ENCODE measurements at regions of chr9 and their contacts with region 1.

Region 1: DNA sequence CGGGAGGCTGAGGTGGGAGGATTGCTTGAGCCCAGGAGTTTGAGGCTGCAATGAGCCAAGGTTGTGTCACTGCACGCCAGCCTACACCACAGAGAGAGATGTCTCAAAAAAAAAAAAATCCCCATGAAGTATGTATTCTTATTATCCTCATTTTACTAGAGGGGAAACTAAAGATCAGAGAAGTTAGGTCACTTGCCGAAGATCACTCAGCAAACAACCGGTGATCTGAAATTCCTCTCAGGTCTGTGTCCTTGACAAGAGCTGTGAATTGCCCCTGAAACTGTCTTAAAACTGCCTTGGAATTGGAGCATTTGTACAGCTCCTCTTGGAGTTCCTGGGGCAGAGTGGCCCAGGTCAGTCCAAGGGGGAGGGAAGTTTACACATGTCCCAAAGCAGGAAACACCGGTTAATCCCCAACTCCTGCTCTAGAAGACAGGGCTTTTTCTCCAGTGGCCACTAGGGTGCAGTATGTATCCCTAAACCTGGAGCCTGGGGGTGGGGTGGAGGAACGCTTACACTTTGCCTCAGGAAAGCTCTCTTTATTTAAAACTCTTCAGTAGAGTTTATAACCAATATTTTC is 27.6 kb downstream of the AQP7 start:
- DNase-seq: peak; percentile 84
- ATAC-seq: peak; percentile 97
- H3K4me3 Mint-ChIP-seq: no peak overlapping the region
- H3K27ac Mint-ChIP-seq: no peak overlapping the region
- H3K4me1 Mint-ChIP-seq: peaks cover 4% of the 10 kb centered on the region
- H3K27me3 Mint-ChIP-seq: no peaks in the 10 kb centered on the region
- CTCF ChIP-seq: peak; percentile 92

Region 2: GRCh38 chr9:33320568-33321261 is 54.0 kb before region 1 on chr9:
- CTCF ChIA-PET with region 1: interaction called, 13 read pairs
- POLR2A ChIA-PET with region 1: no interaction called
- intact Hi-C with region 1: no loop called
- DNase-seq: no peak
- ATAC-seq: no peak
- H3K4me3 Mint-ChIP-seq: no peak overlapping the region
- H3K27ac Mint-ChIP-seq: peak overlapping the region; percentile 77
- H3K4me1 Mint-ChIP-seq: peaks cover 12% of the 10 kb centered on the region
- H3K27me3 Mint-ChIP-seq: no peaks in the 10 kb centered on the region
- CTCF ChIP-seq: no peak

Region 3: DNA sequence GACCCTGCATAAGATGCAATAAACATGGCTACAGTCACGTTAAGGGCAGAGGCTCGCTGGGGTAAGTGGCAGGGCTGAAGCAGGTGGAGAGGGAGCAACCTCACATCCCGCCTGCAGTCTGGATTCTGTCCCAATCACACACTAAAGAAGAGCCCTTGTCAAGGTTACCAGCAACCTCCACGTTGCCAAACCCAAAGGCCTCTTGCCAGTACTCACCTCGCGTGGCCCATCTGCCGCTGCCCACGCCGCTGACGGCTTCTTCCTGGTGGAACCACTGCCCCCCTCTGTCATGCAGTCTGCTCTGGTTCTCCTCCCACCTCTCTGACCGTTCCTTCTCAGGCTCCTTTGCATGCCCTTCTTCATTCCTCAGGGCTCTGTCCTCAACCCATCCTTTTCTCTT is 18.9 kb after region 1 on chr9:
- CTCF ChIA-PET with region 1: interaction called, 17 read pairs
- POLR2A ChIA-PET with region 1: interaction called, 3 read pairs
- intact Hi-C with region 1: no loop called
- DNase-seq: no peak
- ATAC-seq: no peak
- H3K4me3 Mint-ChIP-seq: no peak overlapping the region
- H3K27ac Mint-ChIP-seq: no peak overlapping the region
- H3K4me1 Mint-ChIP-seq: no peaks in the 10 kb centered on the region
- H3K27me3 Mint-ChIP-seq: no peaks in the 10 kb centered on the region
- CTCF ChIP-seq: no peak

Region 4: GRCh38 chr9:33452828-33453271 is 78.1 kb after region 1 on chr9:
- CTCF ChIA-PET with region 1: interaction called, 23 read pairs
- POLR2A ChIA-PET with region 1: interaction called, 3 read pairs
- intact Hi-C with region 1: no loop called
- DNase-seq: peak; percentile 80
- ATAC-seq: peak; percentile 84
- H3K4me3 Mint-ChIP-seq: no peak overlapping the region
- H3K27ac Mint-ChIP-seq: peak overlapping the region; percentile 73
- H3K4me1 Mint-ChIP-seq: peaks cover 60% of the 10 kb centered on the region
- H3K27me3 Mint-ChIP-seq: no peaks in the 10 kb centered on the region
- CTCF ChIP-seq: peak; percentile 88

Region 5: DNA sequence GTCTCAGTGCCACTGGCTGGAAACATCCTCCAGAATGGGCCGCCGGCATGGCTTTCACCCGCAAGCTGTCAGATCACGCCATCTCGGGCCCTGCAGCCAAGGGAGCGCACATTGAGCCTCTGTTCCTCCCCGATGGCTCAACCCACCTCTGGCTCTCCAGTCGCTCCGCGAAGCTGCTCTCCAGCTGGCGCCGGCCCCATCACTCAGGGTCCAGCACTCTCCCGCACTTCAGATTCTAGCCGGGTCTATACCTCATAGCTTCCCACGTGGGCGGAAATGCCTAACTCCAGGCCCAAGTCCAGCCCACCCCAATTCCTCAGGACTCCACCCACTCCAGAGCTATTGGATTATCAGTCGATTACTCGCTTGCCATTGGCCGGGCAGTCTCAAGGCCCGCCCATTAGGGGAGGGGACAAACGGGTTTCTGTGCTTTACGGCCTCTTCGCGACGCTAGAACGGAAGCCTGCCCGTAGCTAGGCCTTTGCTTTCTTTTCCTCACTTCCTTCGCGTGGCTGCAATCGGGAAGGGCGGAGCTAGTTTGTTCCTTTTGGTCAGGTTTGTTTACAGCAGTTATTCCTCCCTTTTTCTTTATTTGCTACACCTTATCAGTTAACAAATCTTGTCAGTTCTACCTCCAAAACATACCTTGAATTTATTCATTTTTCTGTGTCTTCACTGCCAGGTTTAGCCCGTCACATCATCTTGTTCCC is 99.1 kb after region 1 on chr9 and contains the start of gene NOL6:
- CTCF ChIA-PET with region 1: interaction called, 47 read pairs
- POLR2A ChIA-PET with region 1: interaction called, 7 read pairs
- intact Hi-C with region 1: no loop called
- DNase-seq: peak; percentile 99
- ATAC-seq: peak; percentile 100
- H3K4me3 Mint-ChIP-seq: peak within 1 kb of the TSS; percentile 89
- H3K27ac Mint-ChIP-seq: peak within 1 kb of the TSS; percentile 94
- H3K4me1 Mint-ChIP-seq: peaks cover 23% of the 10 kb centered on the region
- H3K27me3 Mint-ChIP-seq: no peaks in the 10 kb centered on the region
- CTCF ChIP-seq: no peak
- total RNA-seq, gene NOL6: 45.5 to 45.9 TPM